ENCODE measurements at regions of chr20 and their contacts with region 1.

Region 1: DNA sequence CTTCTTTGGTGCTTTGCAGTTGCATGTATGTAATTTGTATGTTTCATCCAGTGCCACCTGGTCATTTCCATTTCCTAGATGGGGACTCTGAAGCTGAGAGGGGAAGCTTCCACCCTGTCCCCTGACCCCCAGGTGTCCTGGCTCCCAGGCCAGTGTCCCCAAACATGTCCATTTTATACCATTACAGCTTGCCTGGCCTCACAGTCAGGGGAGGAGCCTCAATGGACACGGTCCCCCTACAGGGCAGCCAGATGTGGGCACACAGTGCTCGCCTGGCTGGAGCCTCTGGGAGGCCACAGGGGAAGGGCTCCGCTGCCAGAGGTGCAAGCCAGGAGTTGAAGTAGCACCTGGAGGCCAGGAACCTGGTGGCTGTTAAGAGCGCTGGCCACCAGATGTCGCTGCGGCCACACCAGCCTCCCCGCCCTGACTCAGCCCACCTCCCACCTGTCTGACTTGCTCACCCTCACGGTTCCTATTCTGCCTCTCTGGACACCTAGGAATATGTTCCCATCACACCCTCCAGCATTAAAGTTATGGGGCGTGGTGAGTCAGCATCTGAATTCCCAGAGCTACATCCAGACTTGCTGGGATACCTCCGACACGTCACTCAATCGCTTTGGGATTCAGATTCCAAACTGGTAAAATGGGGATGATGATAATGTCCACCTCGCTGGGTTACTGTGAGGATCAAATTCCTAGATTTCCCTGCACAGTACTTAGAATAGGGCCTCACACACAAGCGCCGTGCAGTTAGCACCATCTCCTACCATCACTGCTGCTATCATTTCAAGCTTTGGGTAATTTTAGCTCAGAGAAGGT is 107.4 kb downstream of the SULF2 start:
- DNase-seq: no peak
- H3K4me3 ChIP-seq: no peak overlapping the region
- CTCF ChIP-seq: peak; percentile 83

Region 2: GRCh38 chr20:47663333-47664067 is 14.3 kb before region 1 on chr20:
- CTCF ChIA-PET with region 1: interaction called, 73 read pairs
- POLR2A ChIA-PET with region 1: no interaction called
- DNase-seq: no peak
- H3K4me3 ChIP-seq: no peak overlapping the region
- CTCF ChIP-seq: peak; percentile 93

Region 3: DNA sequence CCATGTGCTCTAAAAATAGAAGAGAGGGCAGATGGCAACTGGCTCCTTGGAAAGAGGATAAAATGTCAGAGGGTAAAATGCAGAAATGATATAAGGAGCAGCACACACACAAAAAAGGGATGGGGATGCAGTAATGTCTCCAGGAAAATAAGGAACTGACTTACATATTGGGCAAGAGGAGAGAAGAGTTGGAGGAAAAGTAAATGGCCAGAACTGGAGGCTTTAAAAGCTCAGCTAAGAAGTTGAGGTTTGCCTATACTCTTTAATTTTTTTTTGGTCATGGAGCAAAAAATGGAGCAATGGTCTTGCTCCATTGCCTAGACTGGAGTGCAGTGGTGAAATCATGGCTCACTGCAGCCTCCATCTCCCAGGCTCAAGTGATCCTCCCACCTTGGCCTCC is 13.8 kb after region 1 on chr20:
- CTCF ChIA-PET with region 1: interaction called, 20 read pairs
- POLR2A ChIA-PET with region 1: no interaction called
- DNase-seq: no peak
- H3K4me3 ChIP-seq: no peak overlapping the region
- CTCF ChIP-seq: no peak

Region 4: DNA sequence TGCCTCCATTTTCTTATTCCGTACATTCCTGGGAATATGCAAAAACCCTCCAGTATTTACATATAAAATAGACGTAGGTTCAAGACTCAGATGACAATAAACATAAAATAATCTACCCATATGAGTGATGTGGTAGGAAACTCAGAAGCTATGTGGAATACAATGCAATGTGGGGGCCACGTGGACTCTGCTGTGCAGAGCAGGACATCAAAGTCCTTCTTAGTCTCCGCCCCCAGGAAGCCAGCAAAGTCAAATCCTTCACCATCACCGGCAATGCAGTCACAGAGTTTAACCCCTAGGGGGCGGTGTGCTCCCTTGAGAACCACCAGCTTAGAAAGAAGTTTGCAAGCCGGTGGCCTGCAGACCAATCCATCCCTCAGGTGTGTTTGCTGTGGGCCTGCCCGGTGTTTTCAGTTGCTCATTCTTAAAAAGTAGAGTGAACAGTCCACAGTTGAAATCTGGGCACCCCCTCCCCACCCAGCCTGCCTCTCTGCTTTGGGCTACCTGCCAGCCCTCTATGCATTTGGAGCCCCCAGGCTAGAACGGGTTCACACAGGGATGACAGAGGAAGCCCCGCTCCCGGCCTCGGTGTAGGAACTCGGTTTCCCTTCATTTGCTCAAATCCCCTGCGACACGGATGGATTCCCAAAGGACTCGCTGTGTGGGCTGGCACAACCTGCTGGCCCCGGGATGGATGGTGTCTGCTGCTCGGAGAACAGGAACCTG is 47.6 kb after region 1 on chr20:
- CTCF ChIA-PET with region 1: interaction called, 18 read pairs
- POLR2A ChIA-PET with region 1: no interaction called
- DNase-seq: no peak
- H3K4me3 ChIP-seq: no peak overlapping the region
- CTCF ChIP-seq: peak; percentile 85

Region 5: DNA sequence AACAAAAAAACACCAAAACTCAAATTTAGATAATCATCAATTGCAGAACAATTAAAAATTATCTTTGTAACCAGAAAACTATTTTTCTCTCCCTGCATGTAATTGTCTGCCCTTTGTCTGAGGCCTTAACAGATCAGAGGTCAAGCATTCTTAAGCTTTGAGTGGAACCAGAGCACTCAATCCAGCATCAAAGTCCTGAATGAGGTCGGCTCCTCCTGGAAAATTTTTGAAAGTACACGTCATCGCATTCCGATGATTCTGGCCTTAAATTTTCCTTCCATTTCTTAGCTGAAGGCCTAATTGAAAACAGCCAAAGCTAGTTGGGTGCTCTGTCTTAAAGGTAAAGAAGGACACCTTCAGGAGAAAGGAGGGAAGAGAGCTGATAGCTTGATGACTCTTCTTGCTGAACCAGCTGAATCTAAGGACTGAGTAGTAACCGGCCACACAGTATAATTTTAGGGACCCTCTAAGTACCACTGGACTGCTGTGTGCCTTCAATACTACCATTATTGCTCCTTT is 617.7 kb after region 1 on chr20:
- CTCF ChIA-PET with region 1: interaction called, 50 read pairs
- POLR2A ChIA-PET with region 1: no interaction called
- DNase-seq: peak; percentile 81
- H3K4me3 ChIP-seq: no peak overlapping the region
- CTCF ChIP-seq: peak; percentile 45

Measured in AG04449 (cell line).